Activated CD4-positive, alpha-beta T cell treated with anti-CD3 and anti-CD28 coated beads, Interleukin-2, amount 10 ng/mL, durations not matched to agents 24 days and 14 days (primary cell): ENCODE measurements at regions of chr16 and their contacts with region 1.

Region 1: GRCh38 chr16:48353565-48354163 is 31.5 kb downstream of the SIAH1 start:
- DNase-seq: peak; percentile 91
- H3K4me3 Mint-ChIP-seq: no peak overlapping the region
- H3K27ac Mint-ChIP-seq: peak overlapping the region; percentile 28
- H3K4me1 Mint-ChIP-seq: peaks cover 23% of the 10 kb centered on the region
- H3K27me3 Mint-ChIP-seq: no peaks in the 10 kb centered on the region

Region 2: GRCh38 chr16:48385272-48386150 is 31.8 kb after region 1 on chr16 and contains the start of gene SIAH1:
- intact Hi-C with region 1: loop called (anchors 2 kb)
- DNase-seq: peak; percentile 97
- H3K4me3 Mint-ChIP-seq: peak within 1 kb of the TSS; percentile 92
- H3K27ac Mint-ChIP-seq: peak within 1 kb of the TSS; percentile 94
- H3K4me1 Mint-ChIP-seq: peaks cover 23% of the 10 kb centered on the region
- H3K27me3 Mint-ChIP-seq: no peaks in the 10 kb centered on the region
- total RNA-seq, gene SIAH1: 13.5 and 15.1 TPM in 2 replicates

Region 3: DNA sequence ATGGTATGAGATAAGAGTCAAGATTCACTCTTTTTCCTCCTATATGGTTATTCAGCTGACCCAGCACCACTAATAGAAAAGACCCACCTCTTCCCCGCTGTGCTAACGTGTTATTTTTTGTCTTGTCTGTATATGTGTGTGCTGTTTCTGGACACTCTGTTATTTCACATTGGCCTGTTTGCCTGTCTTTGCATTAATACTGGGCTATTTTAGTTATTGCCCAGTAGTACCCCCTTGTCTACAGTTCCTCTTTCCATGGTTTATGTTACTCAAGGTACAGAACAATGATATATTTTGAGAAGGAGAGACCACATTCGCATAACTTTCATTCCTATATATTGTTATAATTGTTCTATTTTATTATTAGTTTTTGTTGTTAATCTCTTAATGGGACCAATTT is 105.5 kb after region 1 on chr16:
- intact Hi-C with region 1: loop called (anchors 5 kb)
- DNase-seq: no peak
- H3K4me3 Mint-ChIP-seq: no peak overlapping the region
- H3K27ac Mint-ChIP-seq: peak overlapping the region; percentile 22
- H3K4me1 Mint-ChIP-seq: peaks cover 12% of the 10 kb centered on the region
- H3K27me3 Mint-ChIP-seq: peaks cover 24% of the 10 kb centered on the region

Region 4: GRCh38 chr16:48623304-48624016 is 269.8 kb after region 1 on chr16:
- intact Hi-C with region 1: loop called (anchors 1 kb)
- DNase-seq: peak; percentile 96
- H3K4me3 Mint-ChIP-seq: peak overlapping the region; percentile 80
- H3K27ac Mint-ChIP-seq: peak overlapping the region; percentile 79
- H3K4me1 Mint-ChIP-seq: peaks cover 25% of the 10 kb centered on the region
- H3K27me3 Mint-ChIP-seq: peaks cover 10% of the 10 kb centered on the region